H1 (cell line): ENCODE measurements at regions of chr12 and their contacts with region 1.

Region 1: GRCh38 chr12:4164559-4165558 is 108.7 kb upstream of the CCND2 start:
- DNase-seq: peak; percentile 51 to 78
- H3K4me3 ChIP-seq: peak overlapping the region; percentile 44 to 65 (median 49)
- H3K27ac ChIP-seq: peak overlapping the region; percentile 73; the same call in 1 of the 2 replicates
- H3K4me1 ChIP-seq: peaks cover 4 to 18% (median 10%) of the 10 kb centered on the region in 4 experiments
- H3K27me3 ChIP-seq: peaks cover 0 to 7% (median 5%) of the 10 kb centered on the region in 4 experiments; a peak in 4 of 7 replicates
- CTCF ChIP-seq: no peak
- EP300 ChIP-seq: no peak
- POLR2A ChIP-seq: peak in 1 of 2 experiments; percentile 59; a peak in 1 of 3 replicates
- RAD21 ChIP-seq: no peak

Region 2: DNA sequence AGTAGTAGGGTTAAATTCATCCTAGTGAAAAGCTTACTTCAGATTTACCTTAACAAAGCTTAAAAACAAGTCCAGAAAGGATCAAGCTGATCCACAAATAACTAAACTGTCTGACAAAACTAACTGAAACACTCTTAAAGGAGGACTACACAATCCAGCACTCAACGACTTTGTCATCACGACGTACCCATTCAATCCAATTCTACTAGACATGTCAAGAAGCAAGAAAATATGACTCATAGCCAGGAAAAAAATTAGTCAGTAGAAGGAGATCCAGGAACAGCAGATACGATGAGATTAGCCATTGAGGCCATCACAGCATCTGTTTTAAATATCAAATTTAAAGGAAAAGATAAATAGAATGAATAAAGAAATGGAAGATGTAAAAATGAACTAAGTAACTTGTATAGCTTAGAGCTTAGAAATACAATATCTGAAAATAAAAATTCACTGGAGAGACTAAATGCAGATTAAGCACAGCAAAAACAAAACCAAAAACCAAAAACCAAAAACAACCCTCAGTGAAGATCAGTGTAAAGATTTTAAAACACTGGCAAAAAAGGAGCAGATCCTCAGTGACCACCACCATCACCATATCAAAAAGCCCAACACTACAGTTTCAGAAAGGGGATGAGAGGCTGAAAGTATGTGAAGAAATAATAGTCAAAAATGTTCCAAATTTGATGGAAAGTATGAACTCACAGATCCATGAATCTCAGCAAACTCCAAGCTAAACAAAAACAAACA is 13.7 kb after region 1 on chr12:
- CTCF ChIA-PET with region 1: interaction called, 3 read pairs
- POLR2A ChIA-PET with region 1: interaction called, 13 read pairs
- DNase-seq: peak in 1 of 2 experiments; percentile 3
- H3K4me3 ChIP-seq: no peak overlapping the region
- H3K27ac ChIP-seq: no peak overlapping the region
- H3K4me1 ChIP-seq: no peaks in the 10 kb centered on the region
- H3K27me3 ChIP-seq: no peaks in the 10 kb centered on the region; a peak in 1 of 7 replicates
- CTCF ChIP-seq: no peak
- EP300 ChIP-seq: no peak
- POLR2A ChIP-seq: no peak
- RAD21 ChIP-seq: no peak

Region 3: GRCh38 chr12:4383304-4383865 is 218.5 kb after region 1 on chr12:
- CTCF ChIA-PET with region 1: no interaction called
- POLR2A ChIA-PET with region 1: no interaction called
- DNase-seq: peak; percentile 43 to 61
- H3K4me3 ChIP-seq: no peak overlapping the region
- H3K27ac ChIP-seq: no peak overlapping the region
- H3K4me1 ChIP-seq: peaks cover 0 to 6% (median 4%) of the 10 kb centered on the region in 4 experiments; a peak in 4 of 7 replicates
- H3K27me3 ChIP-seq: 0 out of 7 replicates have a peak, but pooled peaks cover 0 to 1% (median 0%) of the 10 kb centered on the region in 4 experiments
- CTCF ChIP-seq: peak; percentile 77 to 89 (median 77)
- EP300 ChIP-seq: no peak
- POLR2A ChIP-seq: no peak
- RAD21 ChIP-seq: peak; percentile 93 to 95